ENCODE measurements at regions of chr3 and their contacts with region 1.

Region 1: DNA sequence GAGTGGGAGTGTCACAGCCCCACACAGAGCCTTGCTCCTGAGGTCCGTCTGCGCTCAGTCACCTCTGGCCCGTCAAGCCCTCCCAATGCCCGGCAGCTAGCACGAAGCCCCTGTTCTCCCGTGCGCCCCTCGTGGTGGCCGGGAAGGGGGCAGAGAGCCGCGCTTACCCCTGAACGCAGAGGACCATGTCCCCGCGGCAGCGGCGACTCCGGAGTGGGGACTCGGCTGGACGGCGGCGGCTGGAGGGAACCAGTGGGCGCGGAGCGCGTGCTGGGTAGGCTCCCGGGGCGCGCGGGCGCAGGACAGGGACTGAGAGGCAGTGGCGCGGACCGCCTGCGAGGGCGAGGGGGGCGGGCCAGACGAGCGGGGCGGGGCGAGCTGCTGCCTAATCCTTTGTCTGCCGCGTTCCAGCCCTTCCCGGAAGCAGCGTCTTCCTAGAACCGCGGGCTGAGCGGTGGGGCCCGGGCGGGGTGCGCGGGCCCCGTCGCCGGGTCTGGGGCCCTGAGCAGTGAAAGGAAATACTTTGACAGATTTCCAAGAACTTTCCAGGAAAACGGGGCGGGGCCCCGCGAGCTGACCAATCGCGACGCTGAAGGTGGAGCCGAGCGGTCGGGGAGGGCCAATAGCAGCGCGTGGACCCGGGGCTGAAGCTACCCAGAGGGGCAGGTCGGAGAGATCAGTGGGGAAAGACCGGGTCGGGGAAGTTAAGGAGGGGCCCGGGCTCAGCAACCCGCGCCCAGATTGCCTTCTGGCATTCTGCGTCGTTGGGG is at the start of gene CISH:
- DNase-seq: no peak
- ATAC-seq: peak; percentile 79
- H3K4me3 ChIP-seq: peak within 1 kb of the TSS; percentile 54 to 64
- H3K27ac ChIP-seq: peak within 1 kb of the TSS; percentile 62
- H3K4me1 ChIP-seq: peaks cover 14 to 37% of the 10 kb centered on the region in 2 experiments
- H3K27me3 ChIP-seq: no peaks in the 10 kb centered on the region
- CTCF ChIP-seq: peak in 2 of 3 experiments; percentile 44 to 56; a peak in 4 of 6 replicates
- POLR2A ChIP-seq: peak; percentile 31
- RAD21 ChIP-seq: no peak
- total RNA-seq, gene CISH: 4.5 TPM

Region 2: GRCh38 chr3:50177346-50177745 is 434.3 kb before region 1 on chr3:
- CTCF ChIA-PET with region 1: no interaction called
- POLR2A ChIA-PET with region 1: no interaction called
- RAD21 ChIA-PET with region 1: no interaction called
- intact Hi-C with region 1: no loop called
- DNase-seq: no peak
- ATAC-seq: no peak
- H3K4me3 ChIP-seq: no peak overlapping the region
- H3K27ac ChIP-seq: no peak overlapping the region
- H3K4me1 ChIP-seq: peaks cover 8 to 11% of the 10 kb centered on the region in 2 experiments; a peak in 3 of 4 replicates
- H3K27me3 ChIP-seq: no peaks in the 10 kb centered on the region
- CTCF ChIP-seq: no peak
- POLR2A ChIP-seq: no peak
- RAD21 ChIP-seq: no peak

Region 3: GRCh38 chr3:50350527-50351322 is 260.9 kb before region 1 on chr3 and contains the starts of genes CYB561D2 and NPRL2:
- CTCF ChIA-PET with region 1: interaction called, 3 read pairs
- POLR2A ChIA-PET with region 1: no interaction called
- RAD21 ChIA-PET with region 1: interaction called in 1 of 2 experiments, 3 read pairs
- intact Hi-C with region 1: loop called (anchors 5 kb)
- DNase-seq: peak; percentile 89
- ATAC-seq: peak; percentile 92
- H3K4me3 ChIP-seq: peak within 1 kb of the TSS; percentile 73 to 83
- H3K27ac ChIP-seq: peak within 1 kb of the TSS; percentile 70
- H3K4me1 ChIP-seq: peaks cover 6 to 37% of the 10 kb centered on the region in 2 experiments
- H3K27me3 ChIP-seq: no peaks in the 10 kb centered on the region
- CTCF ChIP-seq: no peak
- POLR2A ChIP-seq: peak; percentile 78
- RAD21 ChIP-seq: no peak
- total RNA-seq, gene CYB561D2: 9.5 TPM
- total RNA-seq, gene NPRL2: 35.4 TPM

Region 4: DNA sequence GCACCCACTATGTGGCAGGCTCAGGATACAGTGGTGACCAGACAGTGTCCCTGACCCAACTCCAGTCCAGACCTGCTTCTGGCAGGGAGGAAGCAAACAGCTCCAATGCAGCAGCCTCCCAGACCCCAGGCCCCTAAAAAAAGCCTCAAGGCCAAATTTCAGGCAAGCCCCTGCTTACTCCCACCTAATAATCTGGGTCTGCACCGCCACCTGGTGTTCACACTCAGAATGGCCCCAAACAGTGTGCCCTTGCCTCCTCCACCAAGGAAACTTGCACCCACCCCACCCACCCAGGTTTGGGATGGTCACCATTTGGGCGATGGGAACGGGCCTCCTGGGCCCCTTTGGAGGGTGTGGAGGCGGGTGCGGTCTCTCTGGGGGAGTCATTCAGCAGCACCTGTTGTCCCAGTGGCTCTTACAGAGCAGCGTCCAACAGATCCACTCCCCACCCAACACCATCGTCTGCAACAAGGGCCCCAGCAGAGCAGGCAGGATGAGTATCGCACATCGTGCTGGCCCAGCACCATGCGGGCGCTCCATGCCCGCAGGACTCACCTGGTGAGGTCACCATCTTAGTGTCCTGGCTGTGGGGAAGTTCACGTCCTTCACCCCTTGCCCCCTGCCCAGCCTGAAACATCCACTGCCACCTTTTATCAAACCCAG is 61.4 kb before region 1 on chr3:
- CTCF ChIA-PET with region 1: interaction called, 8 read pairs
- POLR2A ChIA-PET with region 1: no interaction called
- RAD21 ChIA-PET with region 1: no interaction called
- intact Hi-C with region 1: loop called (anchors 1 kb)
- DNase-seq: no peak
- ATAC-seq: peak; percentile 81
- H3K4me3 ChIP-seq: no peak overlapping the region
- H3K27ac ChIP-seq: no peak overlapping the region; the same call in 1 of the 2 replicates
- H3K4me1 ChIP-seq: peaks cover 12 to 17% of the 10 kb centered on the region in 2 experiments
- H3K27me3 ChIP-seq: no peaks in the 10 kb centered on the region
- CTCF ChIP-seq: peak; percentile 64 to 76 (median 74); a peak in 5 of 6 replicates
- POLR2A ChIP-seq: no peak
- RAD21 ChIP-seq: peak; percentile 81

Region 5: GRCh38 chr3:50627407-50628051 is 15.9 kb after region 1 on chr3:
- CTCF ChIA-PET with region 1: interaction called, 18 read pairs
- POLR2A ChIA-PET with region 1: interaction called, 3 read pairs
- RAD21 ChIA-PET with region 1: interaction called in 1 of 2 experiments, 3 read pairs
- intact Hi-C with region 1: no loop called
- DNase-seq: peak; percentile 88
- ATAC-seq: peak; percentile 91
- H3K4me3 ChIP-seq: peak overlapping the region; percentile 27 to 41
- H3K27ac ChIP-seq: peak overlapping the region; percentile 87
- H3K4me1 ChIP-seq: peaks cover 65 to 98% of the 10 kb centered on the region in 2 experiments
- H3K27me3 ChIP-seq: no peaks in the 10 kb centered on the region
- CTCF ChIP-seq: peak in 2 of 3 experiments; percentile 60 to 65; a peak in 4 of 6 replicates
- POLR2A ChIP-seq: no peak
- RAD21 ChIP-seq: no peak

Region 6: GRCh38 chr3:50971487-50971924 is 359.9 kb after region 1 on chr3:
- CTCF ChIA-PET with region 1: no interaction called
- POLR2A ChIA-PET with region 1: no interaction called
- RAD21 ChIA-PET with region 1: no interaction called
- intact Hi-C with region 1: loop called (anchors 5 kb)
- DNase-seq: peak; percentile 73
- ATAC-seq: peak; percentile 96
- H3K4me3 ChIP-seq: no peak overlapping the region
- H3K27ac ChIP-seq: no peak overlapping the region
- H3K4me1 ChIP-seq: peaks cover 0 to 3% of the 10 kb centered on the region in 2 experiments; a peak in 1 of 4 replicates
- H3K27me3 ChIP-seq: no peaks in the 10 kb centered on the region
- CTCF ChIP-seq: peak; percentile 88 to 99 (median 96)
- POLR2A ChIP-seq: no peak
- RAD21 ChIP-seq: peak; percentile 94

Region 7: GRCh38 chr3:51371943-51372557 is 760.4 kb after region 1 on chr3:
- CTCF ChIA-PET with region 1: interaction called, 27 read pairs
- POLR2A ChIA-PET with region 1: interaction called, 4 read pairs
- RAD21 ChIA-PET with region 1: interaction called, 5 read pairs
- intact Hi-C with region 1: loop called (anchors 1 kb)
- DNase-seq: peak; percentile 51
- ATAC-seq: peak; percentile 87
- H3K4me3 ChIP-seq: no peak overlapping the region
- H3K27ac ChIP-seq: no peak overlapping the region
- H3K4me1 ChIP-seq: no peaks in the 10 kb centered on the region
- H3K27me3 ChIP-seq: no peaks in the 10 kb centered on the region
- CTCF ChIP-seq: peak; percentile 70 to 88 (median 78)
- POLR2A ChIP-seq: no peak
- RAD21 ChIP-seq: peak; percentile 92

Region 8: GRCh38 chr3:51434746-51435327 is 823.2 kb after region 1 on chr3:
- CTCF ChIA-PET with region 1: interaction called, 3 read pairs
- POLR2A ChIA-PET with region 1: no interaction called
- RAD21 ChIA-PET with region 1: no interaction called
- intact Hi-C with region 1: loop called (anchors 2 kb)
- DNase-seq: peak; percentile 38
- ATAC-seq: peak; percentile 97
- H3K4me3 ChIP-seq: no peak overlapping the region
- H3K27ac ChIP-seq: no peak overlapping the region
- H3K4me1 ChIP-seq: no peaks in the 10 kb centered on the region
- H3K27me3 ChIP-seq: no peaks in the 10 kb centered on the region
- CTCF ChIP-seq: peak; percentile 45 to 93 (median 77)
- POLR2A ChIP-seq: no peak
- RAD21 ChIP-seq: peak; percentile 51